ENCODE measurements at regions of chr15 and their contacts with region 1.

Region 1: GRCh38 chr15:31442203-31443111 is 115.8 kb downstream of the KLF13 start:
- DNase-seq: peak; percentile 41
- H3K4me3 Mint-ChIP-seq: peak overlapping the region; percentile 72
- H3K27ac Mint-ChIP-seq: peak overlapping the region; percentile 43
- H3K4me1 Mint-ChIP-seq: peaks cover 53% of the 10 kb centered on the region
- H3K27me3 Mint-ChIP-seq: no peaks in the 10 kb centered on the region

Region 2: DNA sequence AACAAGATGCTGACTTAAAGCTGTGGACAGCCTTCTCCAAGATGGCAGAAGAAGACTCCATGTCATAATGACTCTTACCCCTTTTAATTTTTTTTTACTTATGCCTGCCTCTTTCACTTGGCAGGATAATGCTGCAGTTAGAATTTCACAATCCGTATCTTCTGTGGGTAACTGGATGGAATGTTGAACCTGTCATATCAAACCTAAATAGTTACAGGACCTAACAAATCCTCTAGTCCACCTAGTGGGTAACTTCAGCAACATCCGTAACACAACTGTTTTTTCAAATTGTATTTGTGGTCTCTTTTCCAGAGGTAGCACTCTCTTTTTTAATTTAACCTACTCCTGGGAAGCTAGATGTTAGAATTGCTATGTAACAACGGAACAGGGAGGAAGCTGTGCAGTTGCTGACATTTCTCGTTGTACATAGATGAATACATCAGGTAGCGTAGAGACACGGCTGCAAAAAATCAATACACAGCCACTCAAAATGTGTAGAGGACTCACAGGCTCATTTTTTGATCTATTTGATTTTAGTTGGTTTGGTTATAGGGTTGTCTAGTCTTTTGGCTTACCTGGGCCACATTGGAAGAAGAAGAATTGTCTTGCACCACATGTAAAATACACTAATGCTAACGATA is 297.1 kb before region 1 on chr15:
- CTCF ChIA-PET with region 1: no interaction called
- POLR2A ChIA-PET with region 1: no interaction called
- intact Hi-C with region 1: no loop called
- DNase-seq: no peak
- H3K4me3 Mint-ChIP-seq: no peak overlapping the region
- H3K27ac Mint-ChIP-seq: no peak overlapping the region
- H3K4me1 Mint-ChIP-seq: no peaks in the 10 kb centered on the region
- H3K27me3 Mint-ChIP-seq: no peaks in the 10 kb centered on the region

Region 3: GRCh38 chr15:31285772-31286261 is 156.6 kb before region 1 on chr15:
- CTCF ChIA-PET with region 1: no interaction called
- POLR2A ChIA-PET with region 1: no interaction called
- intact Hi-C with region 1: no loop called
- DNase-seq: no peak
- H3K4me3 Mint-ChIP-seq: no peak overlapping the region
- H3K27ac Mint-ChIP-seq: no peak overlapping the region
- H3K4me1 Mint-ChIP-seq: no peaks in the 10 kb centered on the region
- H3K27me3 Mint-ChIP-seq: no peaks in the 10 kb centered on the region

Region 4: DNA sequence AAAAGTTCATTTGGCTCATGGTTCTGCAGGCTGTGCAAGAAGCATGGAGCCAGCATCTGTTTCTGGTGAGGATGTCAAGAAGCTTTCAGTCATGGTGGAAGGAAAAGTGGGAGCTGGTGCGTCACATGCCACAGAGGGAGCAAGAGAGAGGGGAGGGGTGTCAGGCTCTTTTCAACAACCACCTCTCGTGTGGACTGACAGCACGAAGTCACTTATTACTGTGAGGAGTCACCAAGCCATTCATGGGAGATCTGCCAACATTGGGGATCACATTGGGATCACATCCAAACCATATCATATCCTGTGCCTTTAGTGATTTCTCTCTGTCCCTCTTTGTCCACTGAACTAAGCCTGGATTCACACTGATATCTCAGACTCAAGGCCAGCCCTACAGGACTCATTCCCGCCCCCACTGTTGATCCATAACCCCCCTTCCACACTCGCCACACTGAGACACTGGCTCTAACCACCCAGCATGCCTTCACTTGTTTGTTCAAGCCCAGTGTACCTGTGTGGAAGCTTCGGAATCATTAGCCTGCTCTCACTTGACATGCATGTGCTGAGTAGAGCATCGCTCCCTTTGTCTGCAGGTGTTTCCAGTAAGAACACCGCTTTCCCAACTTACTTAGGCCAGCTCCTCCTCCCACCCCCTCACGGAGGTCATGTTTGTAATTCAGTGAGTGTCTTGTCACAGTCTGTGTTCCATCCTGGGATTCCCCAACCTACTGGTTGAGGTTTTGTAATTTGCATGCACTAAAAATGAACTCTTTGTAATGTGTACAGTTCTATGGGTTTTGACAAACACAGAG is 16.3 kb after region 1 on chr15:
- CTCF ChIA-PET with region 1: interaction called, 34 read pairs
- POLR2A ChIA-PET with region 1: interaction called, 9 read pairs
- intact Hi-C with region 1: no loop called
- DNase-seq: peak; percentile 84
- H3K4me3 Mint-ChIP-seq: peak overlapping the region; percentile 68
- H3K27ac Mint-ChIP-seq: peak overlapping the region; percentile 92
- H3K4me1 Mint-ChIP-seq: peaks cover 38% of the 10 kb centered on the region
- H3K27me3 Mint-ChIP-seq: no peaks in the 10 kb centered on the region

Region 5: DNA sequence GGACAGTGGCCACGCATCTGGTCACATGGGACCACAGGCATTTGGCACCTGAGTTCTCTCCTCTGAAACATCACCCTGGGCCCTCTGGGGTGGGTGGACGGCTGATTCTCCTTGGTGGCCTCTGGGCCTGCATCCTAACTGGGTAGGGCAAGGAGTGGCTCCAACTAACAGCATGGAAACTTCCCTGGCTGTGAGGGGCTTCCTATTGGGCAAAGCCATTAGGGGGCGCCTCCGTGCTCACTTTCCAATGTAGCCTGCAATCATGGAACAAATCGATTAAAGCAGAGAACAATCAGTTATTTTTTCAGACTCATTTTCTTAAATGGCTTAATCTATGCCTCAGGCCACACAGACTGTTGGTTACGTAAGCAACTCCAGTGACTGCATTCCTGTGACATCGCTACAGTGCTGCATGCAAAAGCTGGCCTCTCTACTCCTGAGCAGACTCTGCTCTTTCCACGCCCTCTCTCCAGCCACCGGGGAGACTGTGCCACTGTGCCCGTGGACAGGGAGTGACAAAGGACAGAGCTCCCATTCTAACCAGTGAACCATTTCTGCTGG is 163.0 kb after region 1 on chr15:
- CTCF ChIA-PET with region 1: no interaction called
- POLR2A ChIA-PET with region 1: no interaction called
- intact Hi-C with region 1: no loop called
- DNase-seq: no peak
- H3K4me3 Mint-ChIP-seq: no peak overlapping the region
- H3K27ac Mint-ChIP-seq: no peak overlapping the region
- H3K4me1 Mint-ChIP-seq: no peaks in the 10 kb centered on the region
- H3K27me3 Mint-ChIP-seq: peaks cover 13% of the 10 kb centered on the region

Measured in activated CD4-positive, alpha-beta memory T cell treated with anti-CD3 and anti-CD28 coated beads for 36 hours (primary cell).